ENCODE measurements at regions of chr1 and their contacts with region 1.

Region 1: DNA sequence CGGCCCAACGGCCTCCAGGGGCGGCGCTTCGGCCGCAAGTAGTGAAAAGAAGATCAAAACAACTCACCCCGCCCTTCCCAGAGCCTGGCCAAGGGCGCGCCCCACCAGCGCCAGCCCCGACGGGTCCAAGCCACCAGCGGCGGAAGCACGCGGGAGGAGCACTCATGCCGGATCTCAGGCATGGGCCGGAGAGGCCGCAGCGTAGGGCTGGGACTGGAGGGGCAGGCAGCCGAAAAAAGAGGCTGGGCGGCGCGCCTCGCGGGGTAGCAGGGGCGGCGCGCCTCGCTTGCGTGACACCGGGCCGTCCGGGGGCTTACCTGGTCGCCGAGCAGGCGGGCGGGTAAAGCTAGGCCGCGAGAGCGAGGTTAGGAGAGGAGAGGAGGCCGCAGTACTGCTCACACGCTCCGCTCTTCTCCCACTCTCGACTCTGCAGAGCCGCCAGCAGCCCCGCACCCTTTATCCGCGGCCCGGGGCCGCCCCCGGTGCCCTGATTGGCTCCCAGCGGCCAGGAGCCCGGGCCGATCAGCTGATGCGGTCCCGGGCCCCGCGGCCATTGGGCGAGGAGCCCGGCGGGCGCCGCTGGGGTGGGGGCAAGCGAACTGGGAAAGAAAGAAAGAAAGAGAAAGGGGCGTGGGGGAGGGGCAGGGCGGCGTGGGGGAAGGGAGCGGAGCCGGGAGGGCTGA is at the start of gene GLUL:
- DNase-seq: peak; percentile 73 to 89
- H3K4me3 ChIP-seq: peak within 1 kb of the TSS; percentile 68
- H3K27ac ChIP-seq: peak within 1 kb of the TSS; percentile 50; the same call in 1 of the 2 replicates
- H3K4me1 ChIP-seq: peaks cover 23% of the 10 kb centered on the region
- H3K27me3 ChIP-seq: no peaks in the 10 kb centered on the region
- CTCF ChIP-seq: no peak; the same call in 1 of the 2 replicates
- total RNA-seq, gene GLUL: 335 and 348 TPM in 2 replicates

Region 2: DNA sequence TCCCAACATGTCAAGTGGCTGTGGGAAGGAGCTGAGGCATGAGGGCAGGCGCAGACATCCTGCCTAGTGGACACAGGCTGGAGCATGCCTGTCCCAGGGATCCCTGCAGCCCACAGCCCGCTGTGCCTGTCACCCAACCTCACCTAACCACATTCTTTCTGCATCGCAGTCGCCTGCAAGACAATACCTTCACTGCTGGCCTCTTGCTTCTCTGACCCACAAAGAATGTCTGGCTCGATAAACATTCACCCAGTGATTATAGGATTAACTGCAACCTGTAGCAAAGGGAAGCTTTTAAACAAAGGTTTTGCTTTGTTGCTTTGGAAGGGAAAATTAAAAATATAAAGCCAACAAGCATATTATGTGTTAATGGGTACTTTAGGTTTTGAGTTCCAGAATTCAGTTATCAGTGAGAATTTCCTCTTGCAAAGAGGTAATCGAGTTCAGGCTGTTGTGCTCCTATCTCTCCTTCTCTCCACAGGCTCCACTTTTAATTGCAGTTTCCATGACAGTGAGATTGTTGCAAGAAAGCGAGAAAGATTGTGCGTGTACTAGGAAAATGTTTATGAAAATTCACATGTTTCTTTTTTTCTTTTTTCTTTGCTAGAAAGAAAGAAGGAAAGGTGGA is 290.0 kb before region 1 on chr1:
- CTCF ChIA-PET with region 1: interaction called, 6 read pairs
- POLR2A ChIA-PET with region 1: interaction called, 6 read pairs
- intact Hi-C with region 1: loop called (anchors 1 kb)
- DNase-seq: peak; percentile 91 to 95
- H3K4me3 ChIP-seq: peak overlapping the region; percentile 0; the same call in 1 of the 2 replicates
- H3K27ac ChIP-seq: peak overlapping the region; percentile 54
- H3K4me1 ChIP-seq: peaks cover 24% of the 10 kb centered on the region
- H3K27me3 ChIP-seq: no peaks in the 10 kb centered on the region
- CTCF ChIP-seq: no peak

Region 3: GRCh38 chr1:182120411-182121239 is 270.9 kb before region 1 on chr1:
- CTCF ChIA-PET with region 1: no interaction called
- POLR2A ChIA-PET with region 1: no interaction called
- intact Hi-C with region 1: no loop called
- DNase-seq: no peak
- H3K4me3 ChIP-seq: no peak overlapping the region
- H3K27ac ChIP-seq: no peak overlapping the region
- H3K4me1 ChIP-seq: 0 out of 2 replicates have a peak, but pooled peaks cover 7% of the 10 kb centered on the region
- H3K27me3 ChIP-seq: no peaks in the 10 kb centered on the region
- CTCF ChIP-seq: no peak

Region 4: DNA sequence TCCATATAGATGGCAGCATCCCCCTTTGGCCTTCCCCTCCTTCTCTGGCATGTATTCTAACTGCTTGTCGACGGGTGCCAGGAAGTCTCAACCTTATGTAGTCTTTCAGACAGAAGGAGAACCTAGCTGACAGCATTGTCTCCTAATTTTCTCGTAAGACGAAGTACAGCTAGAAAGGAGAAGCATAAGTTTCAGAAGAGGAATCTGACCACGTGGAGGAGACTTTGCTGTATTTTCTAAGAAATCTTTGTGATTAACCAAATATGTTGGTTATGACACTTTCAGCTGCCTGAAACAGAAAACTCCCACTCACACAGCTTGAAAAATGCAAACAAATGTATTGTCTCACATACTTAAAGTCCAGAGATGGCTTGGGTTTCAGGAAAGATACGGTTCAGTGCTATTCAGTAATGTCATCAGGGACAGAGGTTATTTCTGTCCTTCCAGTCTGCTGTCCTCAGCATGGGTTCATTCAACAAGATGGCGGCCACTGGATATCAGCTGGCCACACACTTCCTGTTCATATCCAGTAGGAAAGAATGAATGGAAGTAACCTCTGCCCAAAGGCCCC is 220.5 kb before region 1 on chr1:
- CTCF ChIA-PET with region 1: interaction called, 15 read pairs
- POLR2A ChIA-PET with region 1: no interaction called
- intact Hi-C with region 1: no loop called
- DNase-seq: no peak
- H3K4me3 ChIP-seq: no peak overlapping the region
- H3K27ac ChIP-seq: no peak overlapping the region
- H3K4me1 ChIP-seq: peaks cover 12% of the 10 kb centered on the region
- H3K27me3 ChIP-seq: no peaks in the 10 kb centered on the region
- CTCF ChIP-seq: no peak

Region 5: DNA sequence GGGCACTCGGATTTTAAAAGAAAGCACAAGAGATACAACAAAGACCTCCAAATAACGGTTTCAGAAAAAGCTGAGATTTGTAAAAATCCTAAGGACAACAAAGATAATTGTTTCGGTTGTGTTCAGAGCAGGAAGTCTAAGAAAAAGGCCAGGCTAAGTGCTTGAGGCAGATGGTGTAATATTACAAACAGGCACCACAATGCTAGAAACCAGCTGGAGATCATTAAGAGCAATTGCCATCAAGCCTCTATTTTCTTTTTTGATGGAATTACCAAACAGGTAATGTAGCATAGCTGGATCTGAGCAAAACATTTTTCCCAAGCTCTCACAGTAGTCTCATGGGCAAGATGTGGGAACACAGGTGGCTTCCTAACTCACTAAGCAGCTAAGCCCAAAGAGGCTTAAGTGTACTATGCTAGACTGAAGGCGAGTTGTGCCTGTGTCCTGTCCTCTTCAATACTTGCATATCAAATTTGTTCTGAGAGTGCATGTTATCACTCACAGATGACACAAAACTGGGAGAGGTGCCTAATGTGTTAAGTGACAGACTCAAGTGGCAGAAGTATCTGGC is 161.5 kb before region 1 on chr1:
- CTCF ChIA-PET with region 1: no interaction called
- POLR2A ChIA-PET with region 1: no interaction called
- intact Hi-C with region 1: loop called (anchors 1 kb)
- DNase-seq: peak in 1 of 2 experiments; percentile 70
- H3K4me3 ChIP-seq: no peak overlapping the region
- H3K27ac ChIP-seq: no peak overlapping the region
- H3K4me1 ChIP-seq: peaks cover 39% of the 10 kb centered on the region
- H3K27me3 ChIP-seq: no peaks in the 10 kb centered on the region
- CTCF ChIP-seq: no peak

Region 6: DNA sequence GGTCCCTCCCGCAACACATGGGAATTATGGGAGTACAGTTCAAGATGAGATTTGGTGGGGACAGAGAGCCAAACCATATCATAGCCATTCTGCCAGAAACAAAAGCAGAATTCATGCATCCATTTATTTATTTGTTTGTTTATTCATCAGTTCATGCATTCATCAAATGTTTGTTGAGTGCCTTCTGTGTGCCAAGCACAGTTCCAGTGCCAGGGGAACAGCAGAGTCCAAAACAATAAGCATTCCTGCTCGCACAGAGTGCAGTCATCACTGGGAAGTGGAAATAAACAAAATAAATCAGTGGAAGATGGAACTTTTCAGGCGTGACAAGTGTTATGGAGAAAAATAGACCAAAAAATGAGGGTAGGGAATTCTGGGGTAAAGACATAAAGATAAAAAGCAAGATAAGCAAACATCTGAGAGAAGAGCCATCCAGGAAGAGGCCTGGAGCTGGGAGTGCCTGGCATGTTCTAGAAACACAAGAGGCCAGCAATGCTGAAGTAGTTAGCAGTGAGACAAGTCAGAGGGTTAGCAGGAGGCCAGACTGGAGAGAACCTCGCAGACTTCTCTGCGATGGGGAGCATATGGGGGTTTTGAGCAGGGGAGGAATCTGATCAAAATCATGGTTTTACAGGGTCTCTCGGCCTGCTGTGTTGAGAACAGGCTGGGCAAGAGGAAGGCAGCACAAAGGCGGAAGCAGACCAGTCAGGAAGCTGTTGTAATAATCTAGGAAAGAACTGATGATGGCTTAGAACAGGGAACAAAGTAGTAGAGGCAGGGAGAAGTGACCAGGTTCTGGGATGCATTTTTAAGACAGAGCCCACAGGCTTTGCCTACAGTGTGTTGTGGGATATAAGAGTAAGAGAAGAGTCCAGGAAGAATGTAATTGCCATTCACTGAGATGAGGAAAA is 113.1 kb before region 1 on chr1:
- CTCF ChIA-PET with region 1: no interaction called
- POLR2A ChIA-PET with region 1: no interaction called
- intact Hi-C with region 1: no loop called
- DNase-seq: no peak
- H3K4me3 ChIP-seq: no peak overlapping the region
- H3K27ac ChIP-seq: no peak overlapping the region
- H3K4me1 ChIP-seq: no peaks in the 10 kb centered on the region
- H3K27me3 ChIP-seq: no peaks in the 10 kb centered on the region
- CTCF ChIP-seq: no peak

Region 7: GRCh38 chr1:182410620-182411273 is 19.2 kb after region 1 on chr1:
- CTCF ChIA-PET with region 1: no interaction called
- POLR2A ChIA-PET with region 1: no interaction called
- intact Hi-C with region 1: no loop called
- DNase-seq: no peak
- H3K4me3 ChIP-seq: no peak overlapping the region
- H3K27ac ChIP-seq: no peak overlapping the region
- H3K4me1 ChIP-seq: no peaks in the 10 kb centered on the region
- H3K27me3 ChIP-seq: peaks cover 4% of the 10 kb centered on the region; the same call in 1 of the 2 replicates
- CTCF ChIP-seq: no peak

Measured in PC-9 (cell line).